Heart right ventricle (tissue), 16 donors: ENCODE measurements at regions of chr6 and their contacts with region 1.

Region 1: DNA sequence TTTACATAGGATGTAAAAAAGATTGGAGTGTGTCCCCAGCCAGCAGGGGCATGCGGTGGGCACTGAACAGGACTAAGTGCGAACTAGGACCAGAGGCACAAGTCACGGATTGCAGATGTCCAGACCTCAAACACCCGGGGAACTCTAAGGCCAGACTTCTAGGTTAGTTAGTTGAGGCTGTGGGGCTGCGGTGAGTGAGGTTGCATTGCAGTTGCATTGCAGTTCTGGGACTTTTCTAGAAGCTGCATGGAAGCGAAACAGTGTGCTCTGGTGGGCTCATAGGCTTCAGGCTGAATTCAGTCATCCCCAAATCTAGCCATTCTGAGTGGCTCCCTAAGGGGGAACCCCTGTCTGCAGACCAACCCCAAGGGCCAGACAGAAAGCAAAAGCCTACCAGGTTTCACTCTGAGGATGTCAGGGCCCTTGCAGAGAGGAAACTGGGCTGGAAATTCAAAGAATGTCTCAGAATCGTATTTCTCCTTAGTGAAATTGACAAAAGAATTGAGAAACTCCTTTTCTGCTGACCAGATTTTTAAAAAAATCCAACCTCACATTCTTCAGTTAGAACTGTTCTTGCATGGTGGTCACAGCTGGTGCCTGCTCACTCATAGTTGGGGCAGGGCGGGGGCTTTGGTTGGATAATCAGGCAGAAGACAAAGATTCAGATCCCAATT is 182.8 kb downstream of the ZDHHC14 start:
- DNase-seq: no peak
- ATAC-seq: no peak
- H3K4me3 ChIP-seq: no peak overlapping the region
- H3K27ac ChIP-seq: no peak overlapping the region
- H3K4me1 ChIP-seq: peaks cover 0 to 4% (median 0%) of the 10 kb centered on the region in 9 donors
- H3K27me3 ChIP-seq: no peaks in the 10 kb centered on the region
- CTCF ChIP-seq: no peak

Region 2: GRCh38 chr6:157428427-157429202 is 135.1 kb before region 1 on chr6:
- intact Hi-C with region 1: no loop called
- DNase-seq: no peak
- ATAC-seq: peak in 4 of 8 donors; percentile 11 to 34 (median 26)
- H3K4me3 ChIP-seq: peak overlapping the region in 2 of 10 donors; percentile 3 to 18
- H3K27ac ChIP-seq: peak overlapping the region; percentile 30 to 91 (median 78)
- H3K4me1 ChIP-seq: peaks cover 0 to 88% (median 36%) of the 10 kb centered on the region in 9 donors
- H3K27me3 ChIP-seq: no peaks in the 10 kb centered on the region
- CTCF ChIP-seq: no peak

Region 3: GRCh38 chr6:157779705-157780604 is 216.2 kb after region 1 on chr6:
- intact Hi-C with region 1: loop called in 1 of 10 experiments (anchors 5 kb)
- DNase-seq: no peak
- ATAC-seq: peak in 5 of 8 donors; percentile 39 to 81 (median 45)
- H3K4me3 ChIP-seq: no peak overlapping the region
- H3K27ac ChIP-seq: peak overlapping the region in 2 of 10 donors; percentile 30 to 39
- H3K4me1 ChIP-seq: peaks cover 0 to 13% (median 0%) of the 10 kb centered on the region in 9 donors
- H3K27me3 ChIP-seq: no peaks in the 10 kb centered on the region
- CTCF ChIP-seq: no peak